ENCODE measurements at regions of chr17 and their contacts with region 1.

Region 1: DNA sequence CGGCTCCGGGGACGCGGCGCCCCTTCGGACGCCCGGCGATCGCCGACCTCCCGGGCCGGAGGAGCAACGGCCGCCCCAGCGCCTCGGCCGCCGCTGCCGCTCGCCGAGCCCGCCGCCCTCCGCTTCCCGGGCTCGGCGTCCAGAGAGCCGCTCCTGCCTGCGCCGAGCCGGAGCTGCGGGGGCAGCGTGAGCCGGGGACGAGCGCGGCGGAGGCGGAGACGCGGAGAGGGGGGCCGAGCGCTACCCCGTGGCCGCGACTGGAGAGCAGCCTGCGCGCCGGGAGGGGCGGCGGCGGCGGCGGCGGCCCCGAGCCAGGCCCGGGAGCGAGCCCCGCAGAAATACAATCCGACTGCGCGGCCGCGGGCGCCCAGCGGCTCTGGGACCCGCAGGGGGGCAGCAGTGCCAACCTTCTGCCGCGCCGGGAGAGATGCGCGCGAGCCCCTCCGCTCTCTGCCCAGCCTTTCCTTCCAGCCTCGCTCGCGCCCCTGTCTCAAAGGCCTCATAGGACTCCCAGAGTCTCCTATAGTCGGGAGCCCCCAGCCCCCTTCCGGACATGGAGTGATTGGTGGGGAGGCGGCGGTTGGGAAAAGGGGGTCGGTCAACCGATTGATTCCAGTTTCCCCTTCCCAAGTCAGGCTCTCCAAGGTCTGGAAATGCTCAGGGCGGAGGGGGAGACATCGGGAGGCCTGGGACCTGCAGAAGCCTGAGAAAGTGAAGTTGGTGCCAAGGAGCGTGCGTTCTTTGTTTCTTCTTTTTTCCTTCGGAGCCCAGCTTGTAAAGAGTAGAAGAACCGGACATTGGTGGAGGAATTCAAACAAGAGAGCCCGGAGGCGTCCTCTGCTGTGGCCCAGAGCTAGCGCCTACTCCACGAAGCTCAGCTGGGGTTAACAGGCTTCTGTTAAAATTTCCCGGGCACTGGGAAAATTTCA is 1.1 kb upstream of the SDK2 start:
- DNase-seq: peak; percentile 40 to 59
- ATAC-seq: peak; percentile 22 to 40
- H3K4me3 ChIP-seq: peak overlapping the region; percentile 59
- H3K27ac ChIP-seq: peak overlapping the region; percentile 67 to 84; a peak in 5 of 6 replicates
- H3K4me1 ChIP-seq: peaks cover 4% of the 10 kb centered on the region; the same call in 1 of the 3 replicates
- CTCF ChIP-seq: peak; percentile 41; the same call in 2 of the 3 replicates
- EP300 ChIP-seq: no peak
- POLR2A ChIP-seq: no peak
- RAD21 ChIP-seq: peak; percentile 9 to 35; a peak in 1 of 5 replicates

Region 2: GRCh38 chr17:73658821-73659515 is 13.7 kb after region 1 on chr17:
- CTCF ChIA-PET with region 1: interaction called, 20 read pairs
- POLR2A ChIA-PET with region 1: no interaction called
- DNase-seq: no peak
- ATAC-seq: no peak
- H3K4me3 ChIP-seq: no peak overlapping the region
- H3K27ac ChIP-seq: no peak overlapping the region
- H3K4me1 ChIP-seq: peaks cover 8% of the 10 kb centered on the region; the same call in 1 of the 3 replicates
- CTCF ChIP-seq: no peak
- EP300 ChIP-seq: no peak
- POLR2A ChIP-seq: no peak
- RAD21 ChIP-seq: no peak

Region 3: GRCh38 chr17:73697872-73698271 is 52.6 kb after region 1 on chr17:
- CTCF ChIA-PET with region 1: no interaction called
- POLR2A ChIA-PET with region 1: no interaction called
- DNase-seq: no peak
- ATAC-seq: peak in 1 of 2 experiments; percentile 69; a peak in 4 of 6 replicates
- H3K4me3 ChIP-seq: no peak overlapping the region
- H3K27ac ChIP-seq: no peak overlapping the region
- H3K4me1 ChIP-seq: no peaks in the 10 kb centered on the region
- CTCF ChIP-seq: no peak
- EP300 ChIP-seq: no peak
- POLR2A ChIP-seq: no peak
- RAD21 ChIP-seq: 0 out of 5 replicates have a peak, but pooled peaks of 1 of the 2 experiments have one; percentile 8

Region 4: DNA sequence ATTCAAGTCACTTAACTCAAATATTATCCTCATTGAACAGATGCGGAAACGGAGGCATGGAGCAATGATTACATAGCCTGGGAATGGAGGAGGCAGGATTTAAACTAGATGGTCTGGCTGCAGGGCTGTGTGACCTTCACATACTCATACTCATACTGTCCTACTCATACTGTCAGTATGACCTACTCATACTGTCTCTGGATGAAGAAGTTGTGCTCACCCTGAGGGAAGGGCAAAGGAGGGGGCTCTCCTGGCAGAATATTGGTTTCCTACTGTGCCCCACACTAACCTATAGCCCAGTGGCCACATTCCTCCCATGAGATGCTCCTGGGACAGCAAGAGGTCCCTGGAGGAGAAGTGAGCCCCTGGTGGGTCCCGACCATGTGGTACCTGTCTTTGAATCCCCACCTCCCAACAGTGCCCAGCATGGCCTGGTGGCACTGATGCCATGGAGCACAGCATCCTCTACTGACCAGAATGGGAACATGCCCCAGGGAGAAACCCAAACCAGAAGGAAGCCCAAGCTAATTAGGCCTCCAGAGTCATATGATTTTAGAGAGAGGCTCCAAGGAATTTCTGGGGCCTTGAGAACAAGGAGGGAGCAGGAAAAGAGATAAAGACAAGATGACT is 196.2 kb after region 1 on chr17:
- CTCF ChIA-PET with region 1: interaction called, 64 read pairs
- POLR2A ChIA-PET with region 1: no interaction called
- DNase-seq: peak; percentile 54 to 60
- ATAC-seq: peak; percentile 70 to 90
- H3K4me3 ChIP-seq: no peak overlapping the region
- H3K27ac ChIP-seq: peak overlapping the region in 1 of 2 experiments; percentile 37; a peak in 1 of 6 replicates
- H3K4me1 ChIP-seq: peaks cover 6% of the 10 kb centered on the region; the same call in 1 of the 3 replicates
- CTCF ChIP-seq: peak; percentile 78
- EP300 ChIP-seq: no peak
- POLR2A ChIP-seq: no peak
- RAD21 ChIP-seq: peak; percentile 92 to 96

Region 5: GRCh38 chr17:73998653-73999645 is 353.6 kb after region 1 on chr17:
- CTCF ChIA-PET with region 1: interaction called, 17 read pairs
- POLR2A ChIA-PET with region 1: no interaction called
- DNase-seq: peak; percentile 49 to 85
- ATAC-seq: peak; percentile 90 to 98
- H3K4me3 ChIP-seq: no peak overlapping the region
- H3K27ac ChIP-seq: no peak overlapping the region
- H3K4me1 ChIP-seq: no peaks in the 10 kb centered on the region
- CTCF ChIP-seq: peak; percentile 66
- EP300 ChIP-seq: no peak
- POLR2A ChIP-seq: no peak
- RAD21 ChIP-seq: peak; percentile 67 to 75

Region 6: DNA sequence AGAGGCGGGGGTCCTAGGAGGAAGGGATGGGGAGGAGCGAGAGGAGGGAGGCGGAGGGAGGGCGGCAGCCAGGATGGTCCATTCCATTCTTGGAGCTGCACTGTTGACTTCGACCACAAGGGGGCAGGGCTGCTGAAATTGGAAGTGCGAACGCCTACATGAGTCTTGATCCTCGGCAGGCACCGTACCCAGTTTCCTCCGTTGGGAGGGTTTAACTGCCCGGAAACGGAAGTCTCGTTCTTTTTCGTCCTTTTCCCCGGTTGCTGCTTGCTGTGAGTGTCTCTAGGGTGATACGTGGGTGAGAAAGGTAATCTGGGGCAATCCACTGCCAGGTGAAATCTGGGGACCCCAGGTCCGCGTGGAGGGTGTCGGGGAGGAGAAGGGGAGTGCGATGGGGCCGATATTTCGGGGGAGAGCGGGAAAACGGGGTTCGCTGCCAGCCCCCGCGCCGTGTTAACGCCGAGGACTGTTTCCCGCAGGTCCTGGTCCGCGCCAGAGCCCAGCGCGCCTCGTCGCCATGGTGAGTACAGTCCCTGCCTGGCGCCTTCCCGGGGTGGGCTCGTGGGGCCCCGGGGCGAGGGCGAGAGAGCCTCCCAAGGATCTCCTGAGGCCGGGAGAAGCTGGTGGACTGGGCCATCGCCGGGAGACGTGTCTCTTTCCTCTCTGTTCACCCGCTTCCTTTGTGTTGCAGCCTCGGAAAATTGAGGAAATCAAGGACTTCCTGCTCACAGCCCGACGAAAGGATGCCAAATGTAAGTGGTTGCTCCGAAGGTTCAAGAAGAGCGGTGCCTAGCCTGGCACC is 558.3 kb after region 1 on chr17 and contains the start of gene RPL38:
- CTCF ChIA-PET with region 1: interaction called, 15 read pairs
- POLR2A ChIA-PET with region 1: no interaction called
- DNase-seq: peak; percentile 95 to 98
- ATAC-seq: peak; percentile 59 to 77
- H3K4me3 ChIP-seq: peak within 1 kb of the TSS; percentile 71
- H3K27ac ChIP-seq: peak within 1 kb of the TSS; percentile 89 to 97
- H3K4me1 ChIP-seq: peaks cover 41% of the 10 kb centered on the region
- CTCF ChIP-seq: peak; percentile 95
- EP300 ChIP-seq: peak in 1 of 2 experiments; percentile 27; a peak in 1 of 5 replicates
- POLR2A ChIP-seq: peak; percentile 96
- RAD21 ChIP-seq: peak in 1 of 2 experiments; percentile 43; a peak in 3 of 5 replicates
- polyA plus RNA-seq, gene RPL38: 2,364 and 3,205 TPM in 2 replicates